Ovary (tissue), 10 donors: ENCODE measurements at regions of chr14 and their contacts with region 1.

Region 1: DNA sequence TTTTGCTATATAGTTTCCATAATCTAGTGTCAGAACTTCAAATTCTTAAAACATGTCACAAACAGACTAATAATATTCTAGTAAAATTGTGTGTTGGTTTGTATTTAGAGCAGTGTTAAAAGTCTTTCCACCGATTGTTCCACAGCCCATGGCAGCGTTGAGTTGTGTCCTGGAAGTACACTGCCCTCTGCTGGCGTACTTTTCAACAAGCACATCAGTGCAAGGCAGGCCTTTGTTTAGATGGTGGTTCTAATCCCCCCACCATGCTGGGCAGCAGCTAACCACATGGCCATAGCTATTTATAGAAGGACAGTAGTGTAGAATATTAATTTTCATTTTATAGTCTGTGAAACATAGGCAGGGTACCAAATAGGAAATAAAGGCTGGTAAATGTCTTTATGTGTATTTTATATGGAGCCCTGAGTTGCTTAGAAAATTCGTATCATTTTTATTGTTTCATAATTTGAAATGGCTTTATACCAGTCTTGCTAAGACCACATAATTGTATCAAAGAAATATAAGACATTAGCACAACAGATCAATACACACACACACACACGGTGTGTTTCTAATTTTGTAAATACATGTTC is 235.4 kb downstream of the SEC23A start:
- DNase-seq: peak; percentile 26 to 42 (median 32)
- H3K4me3 ChIP-seq: no peak overlapping the region
- H3K27ac ChIP-seq: no peak overlapping the region
- H3K4me1 ChIP-seq: no peaks in the 10 kb centered on the region
- H3K27me3 ChIP-seq: no peaks in the 10 kb centered on the region
- CTCF ChIP-seq: peak in 2 of 3 donors; percentile 17 to 25
- EP300 ChIP-seq: no peak
- POLR2A ChIP-seq: no peak

Region 2: DNA sequence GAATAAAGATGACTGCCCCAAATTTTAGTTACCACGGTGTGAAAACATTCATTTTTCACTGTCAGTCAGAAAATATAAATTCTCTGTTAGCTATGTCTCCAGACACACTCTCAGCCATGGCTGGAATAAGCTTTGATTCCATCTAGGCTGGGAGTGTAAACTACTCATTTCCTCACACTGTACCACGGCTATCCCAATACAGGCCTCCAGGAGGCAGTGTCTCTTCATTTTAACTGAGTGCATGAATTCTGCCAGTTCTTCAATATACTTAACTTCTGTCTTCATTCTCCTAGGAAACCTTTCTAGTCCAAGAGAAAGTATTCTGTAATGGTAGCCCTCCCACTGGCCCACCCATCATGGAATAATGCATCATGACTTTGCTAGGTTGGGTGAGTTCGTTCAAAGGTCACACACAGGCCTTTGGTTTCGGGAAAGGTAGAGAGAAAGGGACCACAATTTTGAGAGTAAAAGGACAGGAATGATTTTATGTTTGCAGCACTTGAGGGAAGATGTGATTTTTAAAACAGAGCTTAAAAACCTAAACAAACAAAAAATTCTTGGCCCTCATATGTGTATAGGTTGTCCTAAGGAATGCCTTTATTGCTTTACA is 145.7 kb before region 1 on chr14:
- intact Hi-C with region 1: loop called in 1 of 4 experiments (anchors 10 kb)
- DNase-seq: peak in 2 of 5 donors; percentile 27
- H3K4me3 ChIP-seq: no peak overlapping the region
- H3K27ac ChIP-seq: no peak overlapping the region
- H3K4me1 ChIP-seq: no peaks in the 10 kb centered on the region
- H3K27me3 ChIP-seq: no peaks in the 10 kb centered on the region
- CTCF ChIP-seq: no peak
- EP300 ChIP-seq: no peak
- POLR2A ChIP-seq: no peak

Region 3: GRCh38 chr14:39005044-39005880 is 137.6 kb after region 1 on chr14:
- intact Hi-C with region 1: no loop called
- DNase-seq: no peak
- H3K4me3 ChIP-seq: no peak overlapping the region
- H3K27ac ChIP-seq: no peak overlapping the region
- H3K4me1 ChIP-seq: no peaks in the 10 kb centered on the region
- H3K27me3 ChIP-seq: no peaks in the 10 kb centered on the region
- CTCF ChIP-seq: no peak
- EP300 ChIP-seq: no peak
- POLR2A ChIP-seq: no peak